Left colon (tissue), 2 donors: ENCODE measurements at regions of chr4 and their contacts with region 1.

Region 1: GRCh38 chr4:1628892-1629698 is 55.0 kb downstream of the FAM53A start:
- DNase-seq: peak; percentile 36 to 68
- ATAC-seq: peak; percentile 81

Region 2: GRCh38 chr4:1351854-1352633 is 277.1 kb before region 1 on chr4:
- intact Hi-C with region 1: loop called (anchors 5 to 10 kb)
- DNase-seq: peak; percentile 73 to 95
- ATAC-seq: peak; percentile 46